ENCODE measurements at regions of chr1 and their contacts with region 1.

Region 1: GRCh38 chr1:50929376-50929958 is 30.6 kb downstream of the FAF1 start:
- DNase-seq: peak; percentile 46
- ATAC-seq: no peak
- H3K4me3 ChIP-seq: no peak overlapping the region
- H3K4me3 Mint-ChIP-seq: no peak overlapping the region
- H3K27ac ChIP-seq: no peak overlapping the region
- H3K27ac Mint-ChIP-seq: no peak overlapping the region
- H3K4me1 ChIP-seq: no peaks in the 10 kb centered on the region
- H3K4me1 Mint-ChIP-seq: peaks cover 19% of the 10 kb centered on the region
- H3K27me3 ChIP-seq: no peaks in the 10 kb centered on the region
- H3K27me3 Mint-ChIP-seq: no peaks in the 10 kb centered on the region
- CTCF ChIP-seq: peak; percentile 81

Region 2: GRCh38 chr1:50873458-50874187 is 55.8 kb before region 1 on chr1:
- CTCF ChIA-PET with region 1: interaction called, 17 read pairs
- POLR2A ChIA-PET with region 1: no interaction called
- intact Hi-C with region 1: loop called (anchors 1 kb)
- DNase-seq: peak; percentile 86
- ATAC-seq: peak; percentile 88
- H3K4me3 ChIP-seq: peak overlapping the region in 2 of 5 experiments; percentile 30 to 41
- H3K4me3 Mint-ChIP-seq: peak overlapping the region; percentile 81
- H3K27ac ChIP-seq: no peak overlapping the region
- H3K27ac Mint-ChIP-seq: peak overlapping the region; percentile 68
- H3K4me1 ChIP-seq: peaks cover 0 to 3% of the 10 kb centered on the region in 2 donors
- H3K4me1 Mint-ChIP-seq: peaks cover 11% of the 10 kb centered on the region
- H3K27me3 ChIP-seq: no peaks in the 10 kb centered on the region
- H3K27me3 Mint-ChIP-seq: no peaks in the 10 kb centered on the region
- CTCF ChIP-seq: peak; percentile 91

Region 3: DNA sequence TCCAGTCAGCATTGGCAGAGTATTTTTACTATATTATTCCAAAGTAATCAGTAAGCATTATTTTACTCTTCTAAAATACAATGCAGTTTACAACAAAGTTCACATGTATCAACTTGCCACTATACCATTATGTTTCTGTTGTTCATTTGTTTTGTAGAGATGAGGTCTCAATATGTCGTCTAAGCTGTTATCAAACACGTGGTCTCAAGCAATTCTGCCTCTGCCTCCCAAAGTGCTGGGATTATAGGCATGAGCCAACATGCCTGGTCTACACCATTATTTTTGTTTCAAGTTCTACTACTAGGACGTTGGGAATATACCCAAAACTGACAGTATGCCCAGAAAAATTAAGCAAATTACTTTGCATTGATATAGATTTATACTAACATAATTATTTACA is 10.8 kb after region 1 on chr1:
- CTCF ChIA-PET with region 1: interaction called, 10 read pairs
- POLR2A ChIA-PET with region 1: no interaction called
- intact Hi-C with region 1: no loop called
- DNase-seq: no peak
- ATAC-seq: no peak
- H3K4me3 ChIP-seq: no peak overlapping the region
- H3K4me3 Mint-ChIP-seq: no peak overlapping the region
- H3K27ac ChIP-seq: no peak overlapping the region
- H3K27ac Mint-ChIP-seq: no peak overlapping the region
- H3K4me1 ChIP-seq: peaks cover 0 to 11% of the 10 kb centered on the region in 2 donors
- H3K4me1 Mint-ChIP-seq: peaks cover 31% of the 10 kb centered on the region
- H3K27me3 ChIP-seq: no peaks in the 10 kb centered on the region
- H3K27me3 Mint-ChIP-seq: no peaks in the 10 kb centered on the region
- CTCF ChIP-seq: no peak

Region 4: GRCh38 chr1:50968158-50968820 is 38.8 kb after region 1 on chr1:
- CTCF ChIA-PET with region 1: interaction called, 18 read pairs
- POLR2A ChIA-PET with region 1: no interaction called
- intact Hi-C with region 1: loop called (anchors 1 kb)
- DNase-seq: peak; percentile 89
- ATAC-seq: peak; percentile 81
- H3K4me3 ChIP-seq: peak overlapping the region; percentile 73 to 98 (median 87)
- H3K4me3 Mint-ChIP-seq: peak overlapping the region; percentile 97
- H3K27ac ChIP-seq: peak overlapping the region; percentile 77 to 83
- H3K27ac Mint-ChIP-seq: peak overlapping the region; percentile 93
- H3K4me1 ChIP-seq: peaks cover 20 to 26% of the 10 kb centered on the region in 2 donors
- H3K4me1 Mint-ChIP-seq: peaks cover 24% of the 10 kb centered on the region
- H3K27me3 ChIP-seq: peaks cover 0 to 27% (median 11%) of the 10 kb centered on the region in 4 experiments
- H3K27me3 Mint-ChIP-seq: peaks cover 13% of the 10 kb centered on the region
- CTCF ChIP-seq: peak; percentile 62

Region 5: DNA sequence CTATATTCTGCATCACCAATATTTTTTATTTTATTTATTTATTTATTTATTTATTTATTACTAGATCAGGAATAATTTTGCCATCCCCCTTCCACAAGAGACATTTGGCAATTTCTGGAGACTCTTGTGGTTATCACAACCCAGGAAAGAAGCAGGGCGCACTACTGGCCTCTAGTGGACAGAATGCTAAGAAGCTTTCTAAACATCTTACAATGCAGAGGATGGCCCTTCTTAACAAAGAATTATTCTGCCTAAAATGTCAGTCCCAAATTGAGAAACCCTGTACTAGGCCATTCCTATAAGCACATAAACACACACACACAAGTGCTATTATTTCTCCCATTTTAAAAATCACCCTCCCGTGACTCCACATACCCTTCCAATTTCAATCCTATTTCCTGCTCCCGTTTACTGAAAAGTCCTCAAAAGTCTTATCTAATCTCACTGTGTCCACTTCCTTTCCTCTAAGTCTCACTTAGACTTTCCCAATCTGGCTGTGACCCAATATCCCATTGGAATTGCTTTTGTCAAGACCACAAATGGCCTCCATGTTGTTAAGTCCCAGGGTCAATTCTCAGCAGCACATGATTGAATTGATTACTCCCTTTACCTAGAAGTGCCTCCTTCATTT is 262.9 kb after region 1 on chr1:
- CTCF ChIA-PET with region 1: interaction called, 72 read pairs
- POLR2A ChIA-PET with region 1: no interaction called
- intact Hi-C with region 1: no loop called
- DNase-seq: peak; percentile 63
- ATAC-seq: no peak
- H3K4me3 ChIP-seq: no peak overlapping the region
- H3K4me3 Mint-ChIP-seq: no peak overlapping the region
- H3K27ac ChIP-seq: no peak overlapping the region
- H3K27ac Mint-ChIP-seq: no peak overlapping the region
- H3K4me1 ChIP-seq: no peaks in the 10 kb centered on the region
- H3K4me1 Mint-ChIP-seq: no peaks in the 10 kb centered on the region
- H3K27me3 ChIP-seq: no peaks in the 10 kb centered on the region
- H3K27me3 Mint-ChIP-seq: peaks cover 9% of the 10 kb centered on the region
- CTCF ChIP-seq: peak; percentile 88

Region 6: DNA sequence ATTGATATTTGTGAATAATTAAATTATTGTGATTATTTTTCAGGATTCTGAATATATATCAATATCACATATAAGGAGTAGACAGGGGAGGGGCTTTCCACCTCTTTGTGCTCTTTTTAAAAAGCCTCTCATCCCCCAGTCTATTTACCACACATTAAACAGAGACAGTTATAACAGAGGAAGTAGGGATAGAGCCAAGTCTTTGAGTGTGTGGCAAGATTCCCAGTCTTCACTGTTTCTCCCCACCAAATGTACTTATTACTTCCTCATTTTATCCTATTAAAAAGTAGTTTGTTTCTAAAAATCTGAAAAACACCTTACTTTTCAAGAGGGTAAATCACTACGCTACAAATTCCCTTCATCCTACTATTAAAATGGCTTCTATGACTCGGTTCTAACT is 542.9 kb after region 1 on chr1:
- CTCF ChIA-PET with region 1: no interaction called
- POLR2A ChIA-PET with region 1: no interaction called
- intact Hi-C with region 1: no loop called
- DNase-seq: no peak
- ATAC-seq: no peak
- H3K4me3 ChIP-seq: no peak overlapping the region
- H3K4me3 Mint-ChIP-seq: no peak overlapping the region
- H3K27ac ChIP-seq: peak overlapping the region in 1 of 2 donors; percentile 58
- H3K27ac Mint-ChIP-seq: no peak overlapping the region
- H3K4me1 ChIP-seq: no peaks in the 10 kb centered on the region
- H3K4me1 Mint-ChIP-seq: peaks cover 16% of the 10 kb centered on the region
- H3K27me3 ChIP-seq: no peaks in the 10 kb centered on the region
- H3K27me3 Mint-ChIP-seq: no peaks in the 10 kb centered on the region
- CTCF ChIP-seq: no peak